Activated CD4-positive, alpha-beta T cell treated with anti-CD3 and anti-CD28 coated beads for 36 hours (primary cell): ENCODE measurements at regions of chr2 and their contacts with region 1.

Region 1: DNA sequence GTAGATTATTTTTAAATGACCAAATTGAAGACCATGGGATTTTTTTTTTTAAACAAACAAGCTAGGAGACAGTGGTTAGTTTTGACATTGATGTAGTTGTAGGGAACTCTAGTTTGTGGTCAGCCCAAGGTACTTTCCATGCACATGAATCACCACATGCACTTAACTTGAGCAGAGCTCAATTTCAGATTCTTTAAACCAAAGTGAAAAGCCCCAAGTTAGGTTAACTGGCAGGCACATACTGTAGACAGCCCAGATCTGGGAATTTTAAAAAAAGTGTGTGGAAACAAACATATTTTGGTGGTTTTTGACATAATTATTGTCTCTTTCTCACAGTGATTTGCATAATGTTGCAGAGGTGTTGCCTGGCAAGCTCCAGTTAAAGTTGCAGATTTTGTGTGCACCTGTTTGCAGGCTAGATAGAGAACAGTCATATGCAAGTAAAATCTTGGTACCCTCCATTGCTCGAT is 88.4 kb downstream of the BCL2L11 start:
- DNase-seq: peak; percentile 68
- ATAC-seq: peak; percentile 95
- H3K4me3 Mint-ChIP-seq: peak overlapping the region; percentile 1
- H3K27ac Mint-ChIP-seq: no peak overlapping the region
- H3K4me1 Mint-ChIP-seq: peaks cover 15% of the 10 kb centered on the region
- H3K27me3 Mint-ChIP-seq: peaks cover 12% of the 10 kb centered on the region

Region 2: GRCh38 chr2:110979471-110980338 is 229.4 kb before region 1 on chr2:
- CTCF ChIA-PET with region 1: no interaction called
- POLR2A ChIA-PET with region 1: no interaction called
- intact Hi-C with region 1: no loop called
- DNase-seq: no peak
- ATAC-seq: no peak
- H3K4me3 Mint-ChIP-seq: no peak overlapping the region
- H3K27ac Mint-ChIP-seq: no peak overlapping the region
- H3K4me1 Mint-ChIP-seq: no peaks in the 10 kb centered on the region
- H3K27me3 Mint-ChIP-seq: peaks cover 9% of the 10 kb centered on the region

Region 3: GRCh38 chr2:111168528-111169239 is 40.4 kb before region 1 on chr2:
- CTCF ChIA-PET with region 1: no interaction called
- POLR2A ChIA-PET with region 1: no interaction called
- intact Hi-C with region 1: loop called (anchors 2 to 5 kb)
- DNase-seq: peak; percentile 88
- ATAC-seq: peak; percentile 98
- H3K4me3 Mint-ChIP-seq: no peak overlapping the region
- H3K27ac Mint-ChIP-seq: no peak overlapping the region
- H3K4me1 Mint-ChIP-seq: peaks cover 24% of the 10 kb centered on the region
- H3K27me3 Mint-ChIP-seq: peaks cover 21% of the 10 kb centered on the region

Region 4: DNA sequence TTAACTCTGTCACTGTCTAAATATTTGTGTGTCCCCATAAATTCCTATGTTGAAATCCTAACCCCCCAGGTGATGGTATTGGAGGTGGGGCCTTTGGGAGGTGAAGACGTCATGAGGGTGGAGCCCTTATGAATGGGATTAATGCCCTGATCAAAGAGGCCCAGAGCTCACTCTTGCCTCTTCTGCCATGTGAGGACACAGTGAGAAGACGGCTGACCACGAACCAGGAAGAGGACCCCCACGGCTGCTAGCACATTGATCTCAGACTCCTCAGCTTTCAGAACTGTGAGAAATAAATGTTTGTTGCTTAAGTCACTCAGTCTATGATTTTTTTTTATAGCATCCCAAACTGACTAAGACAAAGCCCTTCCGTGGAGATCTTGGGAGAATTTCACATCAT is 17.2 kb before region 1 on chr2:
- CTCF ChIA-PET with region 1: no interaction called
- POLR2A ChIA-PET with region 1: no interaction called
- intact Hi-C with region 1: loop called in 1 of 2 experiments (anchors 2 kb)
- DNase-seq: no peak
- ATAC-seq: no peak
- H3K4me3 Mint-ChIP-seq: no peak overlapping the region
- H3K27ac Mint-ChIP-seq: no peak overlapping the region
- H3K4me1 Mint-ChIP-seq: no peaks in the 10 kb centered on the region
- H3K27me3 Mint-ChIP-seq: peaks cover 2% of the 10 kb centered on the region